CD4-positive, alpha-beta T cell (primary cell): ENCODE measurements at regions of chr16 and their contacts with region 1.

Region 1: DNA sequence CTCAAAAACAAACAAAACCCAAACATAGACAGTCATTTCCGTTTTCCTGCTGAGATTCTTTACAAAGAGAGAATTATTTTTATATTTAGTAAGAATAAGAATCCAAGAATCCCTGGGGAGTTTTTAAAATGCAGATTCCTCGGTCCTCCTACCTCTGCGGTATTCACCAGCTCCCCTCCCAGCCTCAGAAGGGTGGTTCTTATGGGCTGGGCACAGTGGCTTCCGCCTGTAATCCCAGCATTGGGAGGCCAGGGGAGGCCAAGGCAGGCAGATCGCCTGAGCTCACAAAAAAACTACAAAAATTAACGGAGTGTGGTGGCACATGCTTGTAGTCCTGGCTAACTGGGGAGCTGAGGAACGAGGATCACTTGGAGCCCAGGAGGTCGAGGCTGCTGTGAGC is 26.7 kb upstream of the USP7 start:
- DNase-seq: no peak
- ATAC-seq: no peak
- H3K4me3 ChIP-seq: no peak overlapping the region
- H3K4me3 Mint-ChIP-seq: no peak overlapping the region
- H3K27ac ChIP-seq: no peak overlapping the region
- H3K27ac Mint-ChIP-seq: no peak overlapping the region
- H3K4me1 ChIP-seq: no peaks in the 10 kb centered on the region
- H3K4me1 Mint-ChIP-seq: no peaks in the 10 kb centered on the region
- H3K27me3 ChIP-seq: no peaks in the 10 kb centered on the region
- H3K27me3 Mint-ChIP-seq: no peaks in the 10 kb centered on the region
- CTCF ChIP-seq: no peak

Region 2: DNA sequence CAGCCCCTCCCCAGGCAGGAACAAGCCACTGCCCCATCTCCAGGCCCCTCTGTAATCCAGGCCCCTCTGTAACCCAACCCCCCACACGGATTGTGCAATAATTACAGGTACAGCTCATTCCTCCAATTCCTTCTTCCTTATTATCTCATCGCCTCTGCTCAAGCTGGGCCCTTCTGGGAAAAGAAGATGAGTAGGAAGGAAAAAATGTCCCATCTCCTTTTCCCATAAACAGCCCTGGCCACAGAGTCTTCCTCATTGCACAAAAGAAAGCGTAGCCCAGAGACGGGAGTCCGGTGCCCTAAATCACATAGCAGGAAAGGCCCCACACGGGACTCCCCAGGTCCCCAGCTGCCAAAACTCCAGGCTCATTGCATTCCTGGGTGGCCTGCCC is 111.9 kb before region 1 on chr16:
- CTCF ChIA-PET with region 1: no interaction called
- POLR2A ChIA-PET with region 1: no interaction called
- intact Hi-C with region 1: no loop called
- DNase-seq: no peak
- ATAC-seq: no peak
- H3K4me3 ChIP-seq: no peak overlapping the region
- H3K4me3 Mint-ChIP-seq: no peak overlapping the region
- H3K27ac ChIP-seq: no peak overlapping the region
- H3K27ac Mint-ChIP-seq: no peak overlapping the region
- H3K4me1 ChIP-seq: peaks cover 19% of the 10 kb centered on the region
- H3K4me1 Mint-ChIP-seq: peaks cover 10% of the 10 kb centered on the region
- H3K27me3 ChIP-seq: peaks cover 0 to 2% of the 10 kb centered on the region in 2 experiments
- H3K27me3 Mint-ChIP-seq: no peaks in the 10 kb centered on the region
- CTCF ChIP-seq: no peak

Region 3: DNA sequence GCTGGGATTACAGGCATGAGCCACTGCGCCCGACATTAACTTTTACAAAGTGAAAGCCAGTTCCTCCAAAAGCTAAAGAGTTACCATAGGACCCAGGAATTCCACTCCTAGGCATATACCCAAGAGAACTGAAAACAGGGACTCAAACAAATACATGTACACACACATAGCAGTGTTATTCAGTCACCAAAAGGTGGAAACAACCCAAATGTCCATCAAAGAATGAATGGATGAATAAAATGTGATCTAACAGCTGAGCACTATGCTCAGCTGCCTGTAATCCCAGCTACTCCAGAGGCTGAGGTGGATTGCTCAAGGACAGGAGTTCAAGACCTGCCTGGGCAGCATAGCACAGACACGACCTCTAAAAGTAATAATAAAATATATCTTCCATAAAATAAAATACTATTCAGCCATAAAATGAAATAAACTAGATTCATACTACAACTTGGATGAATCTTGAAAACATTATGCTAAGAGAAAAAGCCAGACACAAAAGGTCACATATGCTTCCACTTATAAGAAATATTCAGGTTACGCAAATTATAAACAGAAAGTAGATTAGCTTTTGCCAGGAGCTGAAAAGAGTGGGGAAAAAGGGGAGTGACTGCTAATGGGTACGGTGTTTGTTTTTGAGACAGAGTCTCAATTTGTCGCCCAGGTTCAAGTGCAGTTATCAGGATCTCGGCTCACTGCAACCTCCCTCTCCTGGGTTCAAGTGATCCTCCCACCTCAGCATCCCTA is 17.4 kb before region 1 on chr16:
- CTCF ChIA-PET with region 1: no interaction called
- POLR2A ChIA-PET with region 1: no interaction called
- intact Hi-C with region 1: loop called in 1 of 2 experiments (anchors 1 kb)
- DNase-seq: no peak
- ATAC-seq: no peak
- H3K4me3 ChIP-seq: no peak overlapping the region
- H3K4me3 Mint-ChIP-seq: no peak overlapping the region
- H3K27ac ChIP-seq: no peak overlapping the region
- H3K27ac Mint-ChIP-seq: no peak overlapping the region
- H3K4me1 ChIP-seq: no peaks in the 10 kb centered on the region
- H3K4me1 Mint-ChIP-seq: no peaks in the 10 kb centered on the region
- H3K27me3 ChIP-seq: no peaks in the 10 kb centered on the region
- H3K27me3 Mint-ChIP-seq: no peaks in the 10 kb centered on the region
- CTCF ChIP-seq: no peak